Right ventricle myocardium inferior (tissue), 1 donor: ENCODE measurements at regions of chr9 and their contacts with region 1.

Region 1: GRCh38 chr9:132235946-132236661 is 74.2 kb downstream of the NTNG2 start:
- DNase-seq: peak; percentile 80
- ATAC-seq: no peak

Region 2: DNA sequence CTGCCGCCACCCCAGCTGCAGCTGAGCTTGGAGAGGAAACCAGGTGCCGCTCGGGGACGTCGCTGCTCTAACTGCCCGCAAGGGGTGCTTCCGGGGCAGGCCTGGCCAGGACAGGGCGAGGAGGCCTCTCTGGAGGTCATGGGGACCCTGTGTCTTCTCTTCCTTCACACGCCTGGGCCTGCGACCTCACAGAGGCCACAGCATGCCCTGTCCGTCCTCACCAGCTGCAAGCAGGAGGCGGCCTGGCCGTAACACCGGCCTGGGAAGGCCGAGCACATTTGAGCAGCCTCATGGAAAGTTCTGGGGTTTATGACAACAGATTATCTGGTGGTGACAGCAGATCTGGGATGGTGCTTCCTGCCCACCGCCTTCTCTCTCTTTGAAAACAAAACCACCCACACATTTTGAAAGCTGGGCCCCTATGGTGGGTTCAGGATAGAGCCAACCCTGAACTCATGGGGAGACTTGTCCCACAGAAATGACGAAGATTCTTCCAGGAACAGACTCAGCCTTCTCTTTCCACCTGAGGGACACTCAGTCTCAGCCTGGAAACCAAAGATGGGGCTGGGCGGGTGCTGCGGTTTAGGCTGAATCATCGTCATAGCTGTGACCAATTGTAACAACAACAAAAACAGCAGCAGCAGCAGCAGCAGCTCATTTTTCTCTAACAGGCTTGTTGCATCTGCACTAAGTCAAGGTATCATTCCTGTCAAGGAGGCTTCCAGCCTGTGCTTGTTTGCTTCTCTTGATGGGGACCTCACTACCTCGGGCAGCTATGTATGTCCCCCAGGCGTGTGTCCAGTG is 396.6 kb before region 1 on chr9:
- intact Hi-C with region 1: loop called (anchors 10 kb)
- DNase-seq: peak; percentile 52
- ATAC-seq: no peak

Region 3: DNA sequence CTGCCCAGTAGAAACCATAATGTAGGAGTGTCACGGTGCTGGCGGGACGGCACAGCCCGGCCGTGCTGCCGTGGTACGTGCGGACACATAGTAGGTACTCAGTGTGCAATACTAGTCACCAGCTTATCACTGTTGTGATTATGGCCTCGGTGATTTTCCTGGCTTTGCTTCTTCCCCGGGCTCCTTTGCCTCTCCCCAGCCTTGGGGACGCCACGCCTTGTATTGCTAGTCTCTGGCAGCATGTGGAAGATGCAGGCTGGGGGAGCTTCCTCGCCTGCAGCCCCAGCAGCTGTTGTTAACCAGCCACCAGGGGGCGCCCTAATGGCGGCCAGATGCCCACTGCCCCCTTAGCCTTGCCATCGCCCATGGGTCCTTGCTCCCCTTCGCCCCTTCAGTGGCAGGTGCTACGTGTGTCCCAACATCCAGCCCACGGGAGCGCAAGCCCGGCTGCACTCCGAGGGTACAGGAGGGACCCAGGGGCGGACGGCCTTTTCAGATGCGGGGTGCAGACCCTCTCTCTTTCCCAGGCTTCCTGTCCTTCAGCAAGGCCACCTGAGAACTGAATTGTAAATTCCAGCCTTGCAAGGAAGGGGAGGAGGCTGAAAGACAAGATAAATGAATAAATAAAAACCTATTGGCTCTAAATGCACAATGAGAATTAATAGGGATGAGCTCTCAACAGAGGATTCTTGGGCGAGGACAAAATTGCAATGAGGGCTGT is 66.3 kb before region 1 on chr9:
- intact Hi-C with region 1: loop called (anchors 1 kb)
- DNase-seq: peak; percentile 83
- ATAC-seq: peak; percentile 50